HEK293 (cell line): ENCODE measurements at regions of chr11 and their contacts with region 1.

Region 1: GRCh38 chr11:126132319-126132718 is 69.7 kb upstream of the CDON start:
- H3K4me3 ChIP-seq: no peak overlapping the region
- H3K27ac ChIP-seq: 0 out of 2 replicates have a peak overlapping the region, but pooled peaks have one; percentile 9
- H3K4me1 ChIP-seq: peaks cover 19% of the 10 kb centered on the region
- CTCF ChIP-seq: no peak

Region 2: DNA sequence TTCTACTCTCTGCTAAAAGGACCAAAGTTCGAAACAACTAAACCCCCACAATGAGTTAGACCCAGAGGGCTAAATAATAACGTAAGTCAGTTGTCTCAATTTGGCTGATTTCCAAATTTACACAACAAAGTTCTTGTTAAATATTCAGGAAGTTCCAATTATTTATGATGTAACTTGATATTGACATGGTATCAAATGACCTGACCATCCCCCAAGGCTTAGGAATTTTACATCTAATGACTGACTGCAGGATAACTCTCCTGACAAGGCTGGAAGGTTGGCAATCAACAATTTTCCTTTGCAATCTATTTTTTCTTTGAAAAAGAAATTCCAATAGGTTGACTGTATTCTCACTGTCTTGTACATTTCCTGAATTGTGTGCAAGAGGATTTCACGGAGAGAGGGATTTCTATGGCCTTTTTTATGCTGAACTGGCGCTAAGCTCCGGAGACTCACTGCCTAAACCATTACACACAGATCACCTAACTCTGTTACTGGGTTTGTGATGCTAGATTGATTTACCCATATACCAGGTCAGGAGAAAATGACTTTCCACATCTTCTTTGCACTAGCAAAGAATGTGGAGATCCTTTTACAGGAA is 60.1 kb before region 1 on chr11:
- CTCF ChIA-PET with region 1: no interaction called
- POLR2A ChIA-PET with region 1: no interaction called
- H3K4me3 ChIP-seq: no peak overlapping the region
- H3K27ac ChIP-seq: no peak overlapping the region
- H3K4me1 ChIP-seq: peaks cover 7% of the 10 kb centered on the region; the same call in 1 of the 2 replicates
- CTCF ChIP-seq: no peak

Region 3: DNA sequence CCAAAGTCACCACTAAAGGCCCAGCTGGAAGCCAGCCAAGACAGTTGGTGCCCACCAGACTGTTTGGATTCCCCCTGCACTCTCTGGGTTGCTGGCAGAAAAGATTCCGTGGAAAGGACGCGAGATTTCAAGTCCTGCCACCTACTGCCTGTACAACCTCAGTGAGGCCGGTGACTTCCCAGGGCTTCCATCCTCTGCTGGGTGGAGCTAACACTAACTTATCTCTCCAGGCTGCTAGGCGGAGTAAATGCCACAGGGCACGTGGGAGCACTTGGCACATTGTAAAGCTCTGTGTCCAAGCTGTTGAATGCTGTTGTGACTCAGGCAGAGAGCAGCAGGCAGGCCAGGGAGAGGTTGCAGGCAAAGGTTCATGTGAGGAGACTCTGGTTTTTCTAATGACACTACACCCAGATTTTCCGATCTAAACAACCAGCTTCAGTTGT is 18.8 kb before region 1 on chr11:
- CTCF ChIA-PET with region 1: no interaction called
- POLR2A ChIA-PET with region 1: interaction called, 11 read pairs
- H3K4me3 ChIP-seq: no peak overlapping the region
- H3K27ac ChIP-seq: peak overlapping the region; percentile 52; the same call in 1 of the 2 replicates
- H3K4me1 ChIP-seq: peaks cover 24% of the 10 kb centered on the region
- CTCF ChIP-seq: no peak